ENCODE measurements at regions of chr7 and their contacts with region 1.

Region 1: GRCh38 chr7:16420649-16421332 is 547 bp downstream of the CRPPA start:
- DNase-seq: peak; percentile 65 to 93 (median 87)
- ATAC-seq: peak; percentile 90 to 92
- H3K4me3 Mint-ChIP-seq: peak overlapping the region; percentile 82 to 99 (median 91)
- H3K27ac Mint-ChIP-seq: peak overlapping the region; percentile 87 to 98 (median 94)
- H3K4me1 Mint-ChIP-seq: peaks cover 9 to 23% (median 17%) of the 10 kb centered on the region in 4 donors
- H3K27me3 Mint-ChIP-seq: peaks cover 0 to 13% (median 0%) of the 10 kb centered on the region in 5 donors

Region 2: DNA sequence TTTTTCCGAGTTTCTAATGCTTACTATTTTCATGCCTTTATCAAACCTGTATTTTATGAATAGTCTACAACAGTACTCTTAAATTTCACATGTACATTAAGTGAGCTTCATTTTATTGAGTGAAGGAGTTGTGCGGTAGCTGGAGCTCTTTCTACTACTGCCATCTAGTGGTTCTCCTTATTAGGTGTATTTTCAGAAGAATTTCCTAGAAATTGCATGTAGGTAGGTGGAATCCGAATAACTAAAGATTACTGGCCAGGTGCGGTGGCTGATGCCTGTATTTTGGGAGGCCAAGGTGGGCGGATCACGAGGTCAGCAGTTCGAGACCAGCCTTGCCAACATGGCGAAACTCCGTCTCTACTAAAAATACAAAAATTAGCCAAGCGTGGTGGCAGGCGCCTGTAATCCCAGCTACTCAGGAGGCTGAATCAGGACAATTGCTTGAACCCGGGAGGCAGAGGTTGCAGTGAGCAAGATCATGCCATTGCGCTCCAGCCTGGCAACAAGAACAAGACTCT is 144.2 kb after region 1 on chr7:
- POLR2A ChIA-PET with region 1: interaction called, 10 read pairs
- DNase-seq: peak in 4 of 10 donors; percentile 5 to 62 (median 62)
- ATAC-seq: peak; percentile 56 to 67
- H3K4me3 Mint-ChIP-seq: peak overlapping the region in 5 of 10 donors; percentile 29 to 78 (median 50)
- H3K27ac Mint-ChIP-seq: peak overlapping the region in 4 of 10 donors; percentile 14 to 85 (median 56)
- H3K4me1 Mint-ChIP-seq: peaks cover 3 to 24% (median 22%) of the 10 kb centered on the region in 4 donors
- H3K27me3 Mint-ChIP-seq: peaks cover 0 to 11% (median 0%) of the 10 kb centered on the region in 5 donors

Region 3: DNA sequence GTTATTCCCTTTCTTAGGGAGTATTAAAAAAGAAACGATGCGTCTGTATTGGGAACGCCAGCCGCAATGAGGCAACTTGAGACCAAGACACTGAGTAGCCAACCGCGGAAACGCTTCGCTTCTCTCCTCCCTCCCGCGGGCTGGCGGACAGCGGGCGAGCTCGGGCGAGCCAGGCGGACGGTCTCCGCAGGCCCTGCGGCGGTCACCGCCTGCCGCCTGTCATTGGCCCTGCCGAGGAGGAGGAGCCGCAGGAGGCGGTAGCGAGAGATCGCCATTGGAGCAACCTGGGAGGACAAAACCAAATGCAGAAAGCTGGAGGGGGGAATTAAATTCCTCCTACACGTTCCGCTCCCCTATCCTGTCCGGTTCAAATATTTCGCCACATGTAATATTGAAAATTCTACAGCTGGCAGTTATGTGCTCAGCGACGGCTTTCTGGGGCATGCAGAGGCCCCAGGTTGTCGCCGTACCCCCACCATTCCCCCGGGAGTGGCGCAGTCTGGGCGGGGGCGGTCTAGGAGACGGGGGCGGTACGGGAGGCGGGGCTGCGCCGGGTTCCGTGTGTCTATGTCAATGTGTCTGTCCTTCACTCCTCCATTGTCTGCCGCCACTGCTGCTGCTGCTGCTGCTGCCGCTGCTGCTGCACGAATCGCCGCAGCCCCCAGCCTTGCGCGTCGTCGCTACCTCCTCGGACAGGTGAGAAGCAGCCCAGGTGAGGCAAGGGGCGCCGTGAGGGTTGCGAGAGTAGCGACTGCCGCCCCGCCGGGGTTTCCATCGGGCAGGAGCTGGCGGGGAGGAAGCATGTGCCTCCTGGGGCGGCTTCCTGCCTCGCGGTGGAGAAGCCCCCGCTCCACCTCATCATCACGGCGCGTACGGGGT is 225.0 kb after region 1 on chr7 and contains the starts of genes ANKMY2 and BZW2:
- POLR2A ChIA-PET with region 1: interaction called, 40 read pairs
- DNase-seq: peak; percentile 86 to 98 (median 94)
- ATAC-seq: peak; percentile 86
- H3K4me3 Mint-ChIP-seq: peak within 1 kb of the TSS; percentile 91 to 100 (median 100)
- H3K27ac Mint-ChIP-seq: peak within 1 kb of the TSS; percentile 96 to 100 (median 98)
- H3K4me1 Mint-ChIP-seq: peaks cover 29 to 86% (median 66%) of the 10 kb centered on the region in 4 donors
- H3K27me3 Mint-ChIP-seq: no peaks in the 10 kb centered on the region
- polyA plus RNA-seq, gene ANKMY2: 11.9 to 14.7 (median 13.6) TPM
- polyA plus RNA-seq, gene BZW2: 76.9 to 83.4 (median 81.6) TPM

Measured in naive thymus-derived CD8-positive, alpha-beta T cell (primary cell).